ENCODE measurements at regions of chr9 and their contacts with region 1.

Region 1: GRCh38 chr9:71768388-71769174 is at the start of gene CEMIP2:
- DNase-seq: peak; percentile 81 to 87 (median 83)
- ATAC-seq: peak; percentile 93
- H3K4me3 ChIP-seq: peak within 1 kb of the TSS; percentile 73
- H3K27ac ChIP-seq: peak within 1 kb of the TSS; percentile 66
- H3K4me1 ChIP-seq: peaks cover 14 to 18% of the 10 kb centered on the region in 2 experiments; a peak in 4 of 5 replicates
- H3K27me3 ChIP-seq: peaks cover 0 to 5% of the 10 kb centered on the region in 2 experiments; a peak in 2 of 5 replicates
- CTCF ChIP-seq: peak; percentile 24 to 91 (median 73); a peak in 5 of 6 replicates
- EP300 ChIP-seq: no peak
- POLR2A ChIP-seq: peak; percentile 72
- RAD21 ChIP-seq: peak; percentile 69 to 77
- polyA plus RNA-seq, gene CEMIP2: 5.4 to 5.9 TPM

Region 2: GRCh38 chr9:71459082-71459481 is 309.5 kb before region 1 on chr9:
- CTCF ChIA-PET with region 1: no interaction called
- POLR2A ChIA-PET with region 1: no interaction called
- in situ Hi-C with region 1: no loop called
- intact Hi-C with region 1: loop called (anchors 10 kb)
- DNase-seq: no peak
- ATAC-seq: no peak
- H3K4me3 ChIP-seq: no peak overlapping the region
- H3K27ac ChIP-seq: no peak overlapping the region
- H3K4me1 ChIP-seq: no peaks in the 10 kb centered on the region
- H3K27me3 ChIP-seq: no peaks in the 10 kb centered on the region
- CTCF ChIP-seq: no peak
- EP300 ChIP-seq: no peak
- POLR2A ChIP-seq: no peak
- RAD21 ChIP-seq: no peak

Region 3: GRCh38 chr9:71604197-71605063 is 164.2 kb before region 1 on chr9:
- CTCF ChIA-PET with region 1: interaction called, 25 read pairs
- POLR2A ChIA-PET with region 1: no interaction called
- in situ Hi-C with region 1: no loop called
- intact Hi-C with region 1: loop called (anchors 1 kb)
- DNase-seq: peak; percentile 36 to 75 (median 50)
- ATAC-seq: peak; percentile 92
- H3K4me3 ChIP-seq: no peak overlapping the region
- H3K27ac ChIP-seq: no peak overlapping the region
- H3K4me1 ChIP-seq: no peaks in the 10 kb centered on the region
- H3K27me3 ChIP-seq: no peaks in the 10 kb centered on the region
- CTCF ChIP-seq: peak; percentile 75 to 79 (median 76)
- EP300 ChIP-seq: no peak
- POLR2A ChIP-seq: no peak
- RAD21 ChIP-seq: peak; percentile 79 to 92

Region 4: GRCh38 chr9:71614409-71615010 is 154.1 kb before region 1 on chr9:
- CTCF ChIA-PET with region 1: no interaction called
- POLR2A ChIA-PET with region 1: no interaction called
- in situ Hi-C with region 1: loop called (anchors 5 kb)
- intact Hi-C with region 1: no loop called
- DNase-seq: no peak
- ATAC-seq: no peak
- H3K4me3 ChIP-seq: no peak overlapping the region
- H3K27ac ChIP-seq: no peak overlapping the region
- H3K4me1 ChIP-seq: no peaks in the 10 kb centered on the region
- H3K27me3 ChIP-seq: no peaks in the 10 kb centered on the region
- CTCF ChIP-seq: no peak
- EP300 ChIP-seq: no peak
- POLR2A ChIP-seq: no peak
- RAD21 ChIP-seq: no peak

Region 5: GRCh38 chr9:71678999-71679398 is 89.6 kb before region 1 on chr9:
- CTCF ChIA-PET with region 1: no interaction called
- POLR2A ChIA-PET with region 1: no interaction called
- in situ Hi-C with region 1: no loop called
- intact Hi-C with region 1: no loop called
- DNase-seq: no peak
- ATAC-seq: no peak
- H3K4me3 ChIP-seq: no peak overlapping the region
- H3K27ac ChIP-seq: peak overlapping the region; percentile 27; the same call in 1 of the 3 replicates
- H3K4me1 ChIP-seq: peaks cover 7 to 19% of the 10 kb centered on the region in 2 experiments; a peak in 4 of 5 replicates
- H3K27me3 ChIP-seq: no peaks in the 10 kb centered on the region
- CTCF ChIP-seq: no peak
- EP300 ChIP-seq: no peak
- POLR2A ChIP-seq: no peak
- RAD21 ChIP-seq: no peak

Measured in K562 (cell line).